Adrenal gland (tissue), 19 donors: ENCODE measurements at regions of chr14 and their contacts with region 1.

Region 1: DNA sequence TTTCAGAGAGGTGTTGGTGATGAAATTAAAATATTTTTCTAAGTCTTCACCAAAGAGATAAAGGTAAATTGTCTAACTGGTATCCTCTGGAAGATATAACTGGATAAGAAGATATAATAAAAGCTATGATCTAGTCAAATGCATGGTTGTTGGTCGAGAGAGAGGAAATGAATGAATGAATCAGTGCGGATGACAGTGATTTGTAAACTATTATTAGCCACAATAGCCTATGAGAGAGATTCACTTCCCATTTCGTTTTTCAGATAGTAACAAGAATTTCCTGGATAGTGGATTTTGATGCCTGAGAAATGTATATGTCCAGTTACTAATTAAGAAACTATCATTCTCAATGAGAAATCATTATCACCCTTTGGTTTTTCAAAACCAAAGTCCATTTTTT is 63.1 kb downstream of the HEATR5A start:
- DNase-seq: no peak
- H3K4me3 ChIP-seq: no peak overlapping the region
- H3K27ac ChIP-seq: no peak overlapping the region
- H3K4me1 ChIP-seq: peaks cover 0 to 7% of the 10 kb centered on the region in 2 donors
- H3K27me3 ChIP-seq: no peaks in the 10 kb centered on the region
- CTCF ChIP-seq: no peak
- POLR2A ChIP-seq: no peak

Region 2: DNA sequence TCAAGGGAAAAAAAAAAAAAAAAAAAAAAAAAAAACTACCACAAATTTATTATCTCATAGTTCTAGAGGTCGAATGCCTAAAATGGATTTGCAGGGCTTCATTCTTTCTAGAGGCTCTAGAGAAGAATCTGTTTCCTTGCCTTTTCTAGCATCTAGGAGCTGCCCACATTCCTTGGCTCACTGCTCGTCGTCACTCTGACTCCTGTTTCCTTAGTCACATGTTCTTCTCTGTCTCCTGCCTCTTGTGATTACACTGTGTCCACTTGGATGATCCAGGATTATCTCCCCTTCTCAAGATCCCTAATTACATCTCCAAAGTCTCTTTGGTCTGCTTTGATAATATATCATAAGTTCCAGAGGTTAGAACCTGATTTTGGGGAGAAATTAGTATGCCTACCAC is 238.4 kb before region 1 on chr14:
- intact Hi-C with region 1: loop called in 1 of 2 experiments (anchors 10 kb)
- DNase-seq: no peak
- H3K4me3 ChIP-seq: no peak overlapping the region
- H3K27ac ChIP-seq: no peak overlapping the region
- H3K4me1 ChIP-seq: no peaks in the 10 kb centered on the region
- H3K27me3 ChIP-seq: no peaks in the 10 kb centered on the region
- CTCF ChIP-seq: no peak
- POLR2A ChIP-seq: no peak

Region 3: GRCh38 chr14:31219169-31219568 is 138.1 kb before region 1 on chr14:
- intact Hi-C with region 1: loop called in 1 of 2 experiments (anchors 10 kb)
- DNase-seq: no peak
- H3K4me3 ChIP-seq: no peak overlapping the region
- H3K27ac ChIP-seq: no peak overlapping the region
- H3K4me1 ChIP-seq: no peaks in the 10 kb centered on the region
- H3K27me3 ChIP-seq: no peaks in the 10 kb centered on the region
- CTCF ChIP-seq: no peak
- POLR2A ChIP-seq: no peak

Region 4: DNA sequence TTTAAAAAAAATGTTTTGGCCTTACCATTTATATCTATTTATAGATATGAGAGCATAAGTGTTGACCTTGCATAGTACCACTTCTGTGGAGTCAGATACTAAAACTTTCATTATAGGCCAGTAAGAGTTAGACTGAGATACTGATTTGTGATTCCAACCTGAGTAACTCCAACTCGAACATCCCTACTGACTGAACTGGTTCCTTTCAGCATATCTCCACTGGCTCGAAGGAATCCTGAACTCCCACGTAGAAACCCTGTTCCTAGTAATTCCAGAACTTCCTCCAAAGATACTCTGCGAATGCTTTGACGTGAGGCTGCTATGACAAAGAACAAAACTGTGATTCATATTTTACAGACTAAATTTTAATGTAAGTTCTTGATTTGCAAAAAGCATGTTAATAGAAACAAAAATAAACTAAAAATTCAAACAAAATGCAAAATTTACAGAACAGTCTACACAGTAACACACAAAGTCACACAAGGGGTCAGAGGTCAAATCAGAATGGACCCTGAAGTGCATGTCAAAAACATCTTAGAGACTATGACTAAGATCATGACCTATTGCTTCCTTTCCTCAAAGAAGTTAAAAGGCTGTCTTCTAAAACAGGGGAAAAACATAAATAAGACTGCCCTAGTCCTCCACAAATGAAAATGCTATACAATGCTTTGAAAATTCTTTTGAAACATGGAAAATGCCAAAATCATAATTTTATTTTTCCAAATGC is 31.6 kb after region 1 on chr14:
- intact Hi-C with region 1: no loop called
- DNase-seq: no peak
- H3K4me3 ChIP-seq: no peak overlapping the region
- H3K27ac ChIP-seq: peak overlapping the region in 2 of 5 donors; percentile 27 to 54
- H3K4me1 ChIP-seq: peaks cover 12 to 14% of the 10 kb centered on the region in 2 donors
- H3K27me3 ChIP-seq: no peaks in the 10 kb centered on the region
- CTCF ChIP-seq: no peak
- POLR2A ChIP-seq: no peak